K562 (cell line): ENCODE measurements at regions of chr2 and their contacts with region 1.

Region 1: DNA sequence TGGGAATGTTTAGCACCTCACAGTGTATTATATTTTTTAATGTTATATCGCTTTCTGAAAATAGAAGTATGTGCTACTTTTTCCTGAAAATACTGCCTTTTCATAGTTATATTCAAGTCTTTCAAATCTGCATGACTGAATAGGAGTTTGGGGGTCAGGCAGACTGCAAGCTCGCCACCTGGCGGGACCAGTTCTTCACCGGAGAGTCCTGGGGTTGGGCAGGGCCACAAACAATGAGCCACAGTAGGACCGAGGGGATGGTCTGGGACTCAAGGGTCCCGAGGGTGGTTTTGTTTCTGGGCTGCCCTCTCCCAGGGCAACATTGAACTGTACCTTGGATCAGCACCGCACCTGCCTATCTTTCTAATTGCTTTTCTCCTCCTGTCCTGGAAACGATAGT is 70.6 kb downstream of the VWA3B start:
- DNase-seq: peak in 2 of 4 experiments; percentile 43 to 45
- ATAC-seq: peak; percentile 80
- H3K4me3 ChIP-seq: no peak overlapping the region
- H3K27ac ChIP-seq: no peak overlapping the region
- H3K4me1 ChIP-seq: no peaks in the 10 kb centered on the region
- H3K27me3 ChIP-seq: peaks cover 42 to 73% of the 10 kb centered on the region in 2 experiments
- CTCF ChIP-seq: peak; percentile 44 to 53 (median 51)
- EP300 ChIP-seq: no peak
- POLR2A ChIP-seq: no peak
- RAD21 ChIP-seq: peak; percentile 41 to 66

Region 2: GRCh38 chr2:97806738-97807618 is 350.6 kb before region 1 on chr2:
- CTCF ChIA-PET with region 1: no interaction called
- POLR2A ChIA-PET with region 1: interaction called, 3 read pairs
- in situ Hi-C with region 1: no loop called
- intact Hi-C with region 1: loop called (anchors 2 kb)
- DNase-seq: peak; percentile 53 to 84 (median 65)
- ATAC-seq: peak; percentile 100
- H3K4me3 ChIP-seq: no peak overlapping the region
- H3K27ac ChIP-seq: no peak overlapping the region
- H3K4me1 ChIP-seq: no peaks in the 10 kb centered on the region
- H3K27me3 ChIP-seq: no peaks in the 10 kb centered on the region
- CTCF ChIP-seq: peak; percentile 93 to 96 (median 94)
- EP300 ChIP-seq: no peak
- POLR2A ChIP-seq: no peak
- RAD21 ChIP-seq: peak; percentile 96 to 97

Region 3: DNA sequence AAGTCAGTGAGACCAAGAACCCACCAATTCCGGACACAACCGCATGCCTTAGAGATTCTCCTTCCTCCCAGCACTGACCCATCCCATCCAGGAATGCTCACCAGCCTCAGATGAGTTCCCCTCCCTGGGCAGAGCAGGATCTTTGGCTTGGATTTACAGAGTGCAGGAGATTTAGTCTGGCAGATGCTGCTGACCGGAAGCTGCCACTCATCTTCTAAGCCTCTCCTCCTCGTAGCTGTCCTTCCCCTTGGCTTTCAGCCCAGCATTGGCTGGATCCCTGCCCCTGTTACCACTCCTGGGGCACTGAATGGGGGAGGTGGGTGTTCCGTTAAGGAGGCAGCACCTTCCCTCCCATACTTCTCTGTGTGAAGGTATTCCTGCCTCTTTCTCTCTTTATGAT is 17.3 kb before region 1 on chr2:
- CTCF ChIA-PET with region 1: no interaction called
- POLR2A ChIA-PET with region 1: no interaction called
- in situ Hi-C with region 1: no loop called
- intact Hi-C with region 1: no loop called
- DNase-seq: no peak
- ATAC-seq: peak; percentile 50
- H3K4me3 ChIP-seq: no peak overlapping the region
- H3K27ac ChIP-seq: no peak overlapping the region
- H3K4me1 ChIP-seq: peaks cover 0 to 3% of the 10 kb centered on the region in 2 experiments; a peak in 1 of 5 replicates
- H3K27me3 ChIP-seq: peaks cover 4 to 13% of the 10 kb centered on the region in 2 experiments; a peak in 3 of 5 replicates
- CTCF ChIP-seq: no peak
- EP300 ChIP-seq: no peak
- POLR2A ChIP-seq: no peak
- RAD21 ChIP-seq: no peak